ENCODE measurements at regions of chr3 and their contacts with region 1.

Region 1: GRCh38 chr3:187164885-187165543 is 25.7 kb upstream of the RPL39L start:
- DNase-seq: peak; percentile 25
- ATAC-seq: peak; percentile 74; the same call in 1 of the 2 replicates
- H3K4me3 ChIP-seq: no peak overlapping the region
- H3K27ac ChIP-seq: no peak overlapping the region
- H3K4me1 ChIP-seq: no peaks in the 10 kb centered on the region
- H3K27me3 ChIP-seq: peaks cover 9% of the 10 kb centered on the region; the same call in 1 of the 2 replicates
- CTCF ChIP-seq: peak; percentile 84

Region 2: DNA sequence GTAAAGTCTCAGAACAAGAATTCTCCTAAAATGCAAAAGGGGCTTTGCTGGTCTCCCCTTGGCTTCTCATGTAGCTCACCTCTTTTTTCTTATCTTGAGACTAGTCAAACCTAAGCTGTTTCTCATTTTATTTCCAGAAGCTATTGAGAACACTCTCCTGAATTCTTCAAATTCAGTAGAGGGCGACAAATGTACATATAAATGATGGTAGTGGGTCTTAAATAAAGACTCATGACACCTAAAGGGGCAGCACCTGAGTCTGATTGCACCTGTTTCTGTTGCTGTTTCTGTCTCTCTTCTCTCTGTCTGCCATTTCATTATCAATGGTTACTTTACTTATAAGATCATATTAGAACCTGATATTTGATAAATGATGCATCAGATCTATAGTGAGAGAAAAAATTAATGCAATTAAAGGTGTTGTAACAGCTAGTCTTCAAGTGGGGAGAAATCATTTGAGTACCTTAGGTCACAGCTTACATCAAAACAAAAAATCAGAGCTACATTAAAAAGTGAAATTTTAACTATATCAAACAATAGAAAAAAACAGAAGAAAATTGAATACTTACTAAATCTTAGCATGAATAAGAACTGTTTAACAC is 315.5 kb before region 1 on chr3:
- CTCF ChIA-PET with region 1: interaction called, 28 read pairs
- POLR2A ChIA-PET with region 1: no interaction called
- in situ Hi-C with region 1: no loop called
- intact Hi-C with region 1: loop called (anchors 1 kb)
- DNase-seq: peak; percentile 36
- ATAC-seq: peak; percentile 83
- H3K4me3 ChIP-seq: no peak overlapping the region
- H3K27ac ChIP-seq: no peak overlapping the region
- H3K4me1 ChIP-seq: no peaks in the 10 kb centered on the region
- H3K27me3 ChIP-seq: peaks cover 23% of the 10 kb centered on the region
- CTCF ChIP-seq: peak; percentile 67; the same call in 1 of the 2 replicates

Region 3: DNA sequence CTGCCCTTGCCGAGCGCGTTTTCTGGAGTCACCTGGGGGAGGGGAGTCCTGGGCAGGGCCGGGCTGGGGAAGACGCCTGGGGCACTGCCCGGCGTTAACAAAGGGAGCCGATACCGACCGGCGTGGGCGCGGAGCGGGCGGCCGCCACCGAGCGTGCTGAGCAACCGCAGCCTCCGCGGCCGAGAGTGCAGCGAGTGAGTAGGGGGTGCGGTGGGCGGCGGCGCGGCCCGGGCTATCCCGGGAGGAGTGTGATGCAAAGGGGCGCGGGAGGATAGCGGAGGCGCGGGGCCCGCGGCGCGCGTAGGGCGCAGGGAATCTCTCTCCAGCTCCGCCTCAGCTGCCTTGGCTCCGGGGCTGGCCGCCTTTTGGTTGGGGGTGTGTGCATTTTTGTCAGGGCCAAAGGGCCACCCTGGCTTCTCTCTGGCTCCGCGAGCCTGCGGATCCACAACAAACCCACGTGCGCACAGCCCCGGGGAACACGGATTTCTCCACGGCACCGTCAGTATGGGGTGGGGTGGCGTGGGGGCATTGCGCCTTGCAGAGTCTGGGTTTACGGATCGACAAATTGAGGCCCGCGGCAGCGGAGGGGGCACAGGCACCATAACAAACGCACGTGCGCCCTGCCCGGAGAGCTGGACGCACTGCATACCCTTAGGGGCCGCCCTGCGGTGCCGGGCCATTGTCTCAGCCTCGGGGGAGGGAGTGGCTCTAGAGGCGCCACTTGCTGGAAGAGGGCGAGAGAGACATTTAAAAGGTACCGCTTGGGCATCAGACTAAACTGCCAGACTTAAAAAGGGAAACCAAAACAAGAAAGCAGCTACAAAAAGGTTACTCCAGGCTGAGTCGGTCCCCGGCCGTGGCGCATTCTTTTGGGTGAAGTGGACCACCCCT is 234.1 kb before region 1 on chr3:
- CTCF ChIA-PET with region 1: no interaction called
- POLR2A ChIA-PET with region 1: no interaction called
- in situ Hi-C with region 1: no loop called
- intact Hi-C with region 1: no loop called
- DNase-seq: no peak
- ATAC-seq: peak; percentile 76
- H3K4me3 ChIP-seq: peak overlapping the region; percentile 55 to 61
- H3K27ac ChIP-seq: no peak overlapping the region
- H3K4me1 ChIP-seq: peaks cover 11% of the 10 kb centered on the region
- H3K27me3 ChIP-seq: peaks cover 5% of the 10 kb centered on the region
- CTCF ChIP-seq: 0 out of 2 replicates have a peak, but pooled peaks have one; percentile 14

Region 4: GRCh38 chr3:187130346-187131066 is 34.5 kb before region 1 on chr3:
- CTCF ChIA-PET with region 1: interaction called, 10 read pairs
- POLR2A ChIA-PET with region 1: no interaction called
- in situ Hi-C with region 1: no loop called
- intact Hi-C with region 1: no loop called
- DNase-seq: no peak
- ATAC-seq: no peak
- H3K4me3 ChIP-seq: no peak overlapping the region
- H3K27ac ChIP-seq: no peak overlapping the region
- H3K4me1 ChIP-seq: no peaks in the 10 kb centered on the region
- H3K27me3 ChIP-seq: no peaks in the 10 kb centered on the region
- CTCF ChIP-seq: no peak

Measured in Panc1 (cell line).